ENCODE measurements at regions of chr2 and their contacts with region 1.

Region 1: GRCh38 chr2:16281451-16282336 is 341.3 kb downstream of the MYCN start:
- DNase-seq: peak in 1 of 9 experiments; percentile 21
- ATAC-seq: no peak
- H3K4me3 ChIP-seq: no peak overlapping the region
- H3K4me3 Mint-ChIP-seq: no peak overlapping the region
- H3K27ac ChIP-seq: no peak overlapping the region
- H3K27ac Mint-ChIP-seq: no peak overlapping the region
- H3K4me1 ChIP-seq: no peaks in the 10 kb centered on the region
- H3K4me1 Mint-ChIP-seq: no peaks in the 10 kb centered on the region
- H3K27me3 ChIP-seq: no peaks in the 10 kb centered on the region
- H3K27me3 Mint-ChIP-seq: peaks cover 4% of the 10 kb centered on the region
- CTCF ChIP-seq: no peak

Region 2: GRCh38 chr2:15636972-15637785 is 644.5 kb before region 1 on chr2:
- CTCF ChIA-PET with region 1: no interaction called
- POLR2A ChIA-PET with region 1: no interaction called
- intact Hi-C with region 1: loop called in 1 of 2 experiments (anchors 2 kb)
- DNase-seq: peak; percentile 20 to 73 (median 58)
- ATAC-seq: peak; percentile 78
- H3K4me3 ChIP-seq: no peak overlapping the region
- H3K4me3 Mint-ChIP-seq: no peak overlapping the region
- H3K27ac ChIP-seq: no peak overlapping the region
- H3K27ac Mint-ChIP-seq: no peak overlapping the region
- H3K4me1 ChIP-seq: no peaks in the 10 kb centered on the region
- H3K4me1 Mint-ChIP-seq: no peaks in the 10 kb centered on the region
- H3K27me3 ChIP-seq: no peaks in the 10 kb centered on the region
- H3K27me3 Mint-ChIP-seq: no peaks in the 10 kb centered on the region
- CTCF ChIP-seq: peak; percentile 94

Region 3: GRCh38 chr2:15939854-15940660 is 341.6 kb before region 1 on chr2 and contains the start of gene MYCN:
- CTCF ChIA-PET with region 1: interaction called, 26 read pairs
- POLR2A ChIA-PET with region 1: no interaction called
- intact Hi-C with region 1: loop called in 1 of 2 experiments (anchors 5 kb)
- DNase-seq: peak in 6 of 9 experiments; percentile 30 to 63 (median 34)
- ATAC-seq: no peak
- H3K4me3 ChIP-seq: peak within 1 kb of the TSS; percentile 28 to 54
- H3K4me3 Mint-ChIP-seq: peak within 1 kb of the TSS; percentile 75
- H3K27ac ChIP-seq: no peak within 1 kb of the TSS
- H3K27ac Mint-ChIP-seq: no peak within 1 kb of the TSS
- H3K4me1 ChIP-seq: peaks cover 36% of the 10 kb centered on the region
- H3K4me1 Mint-ChIP-seq: peaks cover 31% of the 10 kb centered on the region
- H3K27me3 ChIP-seq: peaks cover 9 to 14% of the 10 kb centered on the region in 2 experiments
- H3K27me3 Mint-ChIP-seq: peaks cover 50% of the 10 kb centered on the region
- CTCF ChIP-seq: peak; percentile 41
- total RNA-seq, gene MYCN: not detected

Region 4: GRCh38 chr2:16069933-16070647 is 211.6 kb before region 1 on chr2:
- CTCF ChIA-PET with region 1: no interaction called
- POLR2A ChIA-PET with region 1: no interaction called
- intact Hi-C with region 1: no loop called
- DNase-seq: no peak
- ATAC-seq: no peak
- H3K4me3 ChIP-seq: no peak overlapping the region
- H3K4me3 Mint-ChIP-seq: no peak overlapping the region
- H3K27ac ChIP-seq: no peak overlapping the region
- H3K27ac Mint-ChIP-seq: no peak overlapping the region
- H3K4me1 ChIP-seq: no peaks in the 10 kb centered on the region
- H3K4me1 Mint-ChIP-seq: no peaks in the 10 kb centered on the region
- H3K27me3 ChIP-seq: no peaks in the 10 kb centered on the region
- H3K27me3 Mint-ChIP-seq: no peaks in the 10 kb centered on the region
- CTCF ChIP-seq: no peak

Region 5: GRCh38 chr2:16257322-16258028 is 24.2 kb before region 1 on chr2:
- CTCF ChIA-PET with region 1: no interaction called
- POLR2A ChIA-PET with region 1: no interaction called
- intact Hi-C with region 1: no loop called
- DNase-seq: no peak
- ATAC-seq: no peak
- H3K4me3 ChIP-seq: no peak overlapping the region
- H3K4me3 Mint-ChIP-seq: no peak overlapping the region
- H3K27ac ChIP-seq: no peak overlapping the region
- H3K27ac Mint-ChIP-seq: no peak overlapping the region
- H3K4me1 ChIP-seq: peaks cover 7% of the 10 kb centered on the region
- H3K4me1 Mint-ChIP-seq: peaks cover 8% of the 10 kb centered on the region
- H3K27me3 ChIP-seq: no peaks in the 10 kb centered on the region
- H3K27me3 Mint-ChIP-seq: no peaks in the 10 kb centered on the region
- CTCF ChIP-seq: no peak